PC-9 (cell line): ENCODE measurements at regions of chr7 and their contacts with region 1.

Region 1: DNA sequence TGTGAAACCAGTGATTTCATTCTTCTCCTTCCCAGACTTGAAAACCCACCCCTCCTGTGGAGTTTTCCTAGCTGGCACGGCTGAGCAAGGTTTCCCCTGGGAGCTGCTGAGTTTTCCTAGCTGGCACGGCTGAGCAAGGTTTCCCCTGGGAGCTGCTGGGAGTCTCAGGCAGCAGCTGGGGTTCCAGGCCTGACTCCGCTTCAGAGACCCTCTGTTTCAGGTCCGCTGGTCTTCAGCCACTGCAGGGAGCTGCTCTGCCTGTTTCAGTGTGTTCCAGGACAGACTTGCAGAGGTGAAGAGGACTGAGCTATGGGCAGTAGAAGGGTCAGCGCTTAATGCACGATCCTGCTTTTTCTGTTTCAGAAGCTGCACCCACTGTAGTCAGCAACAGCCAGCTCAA is 104.9 kb downstream of the XRCC2 start:
- DNase-seq: no peak
- H3K4me3 ChIP-seq: no peak overlapping the region
- H3K27ac ChIP-seq: no peak overlapping the region
- H3K4me1 ChIP-seq: no peaks in the 10 kb centered on the region
- H3K27me3 ChIP-seq: no peaks in the 10 kb centered on the region
- CTCF ChIP-seq: no peak

Region 2: GRCh38 chr7:152354066-152354465 is 217.0 kb before region 1 on chr7:
- CTCF ChIA-PET with region 1: no interaction called
- POLR2A ChIA-PET with region 1: interaction called, 11 read pairs
- intact Hi-C with region 1: no loop called
- DNase-seq: no peak
- H3K4me3 ChIP-seq: no peak overlapping the region
- H3K27ac ChIP-seq: no peak overlapping the region
- H3K4me1 ChIP-seq: no peaks in the 10 kb centered on the region
- H3K27me3 ChIP-seq: no peaks in the 10 kb centered on the region
- CTCF ChIP-seq: no peak